Left ventricle myocardium superior (tissue), 1 donor: ENCODE measurements at regions of chr22 and their contacts with region 1.

Region 1: DNA sequence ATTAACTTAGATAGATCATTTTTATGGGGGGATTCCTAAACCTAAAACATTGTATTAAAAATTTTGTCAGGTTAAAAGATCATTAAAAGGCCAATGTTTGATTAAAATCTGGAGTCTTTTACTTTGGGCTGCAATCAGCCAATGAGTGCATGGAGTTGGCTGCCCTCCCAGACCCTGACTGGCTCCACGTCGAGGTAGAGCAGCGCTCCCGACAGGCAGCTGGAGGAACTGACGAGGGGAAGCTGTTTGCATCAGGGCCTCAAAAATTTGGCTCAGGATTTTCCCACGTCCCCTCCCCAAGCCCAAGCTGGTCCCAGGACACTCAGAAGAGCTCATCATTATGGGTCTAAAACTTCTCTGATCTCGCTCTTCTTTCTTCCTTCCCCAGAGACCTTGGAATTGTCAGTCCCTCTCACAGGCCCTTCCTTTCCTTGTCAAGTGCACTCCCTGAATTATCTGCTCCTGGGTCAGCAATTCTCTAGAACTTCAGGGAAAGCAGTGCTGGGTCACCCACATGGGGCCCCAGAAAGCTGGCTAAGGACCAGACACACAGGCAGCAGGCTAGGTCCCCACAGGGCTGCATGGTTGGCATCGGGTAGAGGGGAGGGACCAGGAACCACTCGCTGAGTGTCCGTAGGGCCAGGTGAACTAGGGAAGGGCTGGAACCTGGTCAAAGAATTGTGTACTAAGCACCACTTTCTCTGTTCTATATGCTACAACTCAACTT is 119.6 kb upstream of the IGLL5 start:
- DNase-seq: no peak
- ATAC-seq: no peak

Region 2: DNA sequence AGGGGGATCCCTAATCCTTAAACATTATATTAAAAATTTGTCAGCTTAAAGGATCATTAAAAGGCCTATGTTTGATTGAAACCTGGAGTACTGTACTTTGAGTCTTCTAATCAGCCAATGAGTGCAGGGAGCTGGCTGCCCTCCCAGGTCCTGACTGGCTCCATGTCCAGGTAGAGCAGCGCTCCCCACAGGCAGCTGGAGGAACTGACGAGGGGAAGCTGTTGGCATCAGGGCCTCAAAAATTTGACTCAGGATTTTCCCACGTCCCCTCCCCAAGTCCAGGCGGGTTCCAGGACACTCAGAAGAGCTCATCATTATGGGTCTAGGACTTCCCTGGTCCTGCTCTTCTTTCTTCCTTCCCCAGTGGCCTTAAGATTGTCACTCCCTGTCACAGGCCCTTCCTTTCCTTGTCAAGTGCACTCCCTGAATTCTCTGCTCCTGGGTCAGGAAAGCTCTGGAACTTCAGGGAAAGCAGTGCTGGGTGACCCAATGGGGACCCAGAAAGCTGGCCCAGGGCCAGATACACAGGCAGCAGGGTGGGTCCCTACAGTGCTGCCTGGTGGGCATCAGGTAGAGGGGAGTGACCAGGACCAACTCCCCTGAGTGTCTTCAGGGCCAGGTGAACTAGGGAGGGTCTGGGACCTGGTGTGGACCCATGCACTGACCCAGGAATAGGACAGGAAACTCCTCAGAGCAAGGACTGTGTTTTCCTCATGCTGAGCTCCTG is 58.2 kb before region 1 on chr22:
- intact Hi-C with region 1: loop called (anchors 5 kb)
- DNase-seq: no peak
- ATAC-seq: no peak

Region 3: GRCh38 chr22:22825213-22825593 is 57.2 kb after region 1 on chr22:
- intact Hi-C with region 1: no loop called
- DNase-seq: no peak
- ATAC-seq: no peak